HEK293 (cell line): ENCODE measurements at regions of chr11 and their contacts with region 1.

Region 1: DNA sequence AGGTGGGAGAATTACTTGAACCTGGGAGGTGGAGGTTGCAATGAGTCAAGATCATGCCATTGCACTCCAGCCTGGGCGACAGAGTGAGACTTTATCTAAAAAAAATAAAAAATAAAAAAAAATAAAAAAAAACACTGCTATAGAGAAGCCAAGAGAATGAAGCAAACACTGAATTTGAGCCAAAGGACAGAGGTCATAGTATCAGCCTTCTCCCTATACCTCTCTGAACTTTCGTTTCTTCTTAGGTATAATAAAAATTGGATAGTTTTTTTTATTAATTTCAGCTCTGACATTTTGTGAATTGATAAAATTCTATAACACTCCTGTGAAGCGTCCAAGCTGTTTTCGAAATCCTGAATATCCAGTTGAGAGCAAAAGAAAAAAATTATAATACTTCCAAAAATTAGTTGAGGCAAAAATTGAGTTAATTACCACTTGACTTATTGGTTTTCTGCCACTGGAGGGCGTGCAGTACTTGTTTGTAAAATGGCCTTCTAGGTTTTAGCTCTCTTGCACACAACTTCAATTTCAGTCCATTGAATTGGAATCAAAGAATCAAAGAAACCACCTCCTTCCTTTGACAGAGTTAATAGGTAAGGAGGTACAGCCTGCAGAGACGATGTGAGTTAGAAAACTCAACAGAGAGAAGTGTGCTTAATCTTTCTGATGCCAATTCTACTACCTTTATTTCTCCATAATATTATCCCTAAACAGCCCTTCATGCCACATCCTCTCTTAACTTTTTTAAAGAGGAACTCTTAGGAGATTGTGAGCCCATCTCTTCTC is 143.2 kb downstream of the BBOX1 start:
- H3K4me3 ChIP-seq: no peak overlapping the region
- H3K27ac ChIP-seq: no peak overlapping the region
- H3K4me1 ChIP-seq: no peaks in the 10 kb centered on the region
- CTCF ChIP-seq: no peak

Region 2: GRCh38 chr11:27201454-27202236 is 17.8 kb after region 1 on chr11:
- CTCF ChIA-PET with region 1: interaction called, 25 read pairs
- POLR2A ChIA-PET with region 1: no interaction called
- H3K4me3 ChIP-seq: no peak overlapping the region
- H3K27ac ChIP-seq: peak overlapping the region; percentile 93
- H3K4me1 ChIP-seq: peaks cover 16% of the 10 kb centered on the region
- CTCF ChIP-seq: no peak

Region 3: DNA sequence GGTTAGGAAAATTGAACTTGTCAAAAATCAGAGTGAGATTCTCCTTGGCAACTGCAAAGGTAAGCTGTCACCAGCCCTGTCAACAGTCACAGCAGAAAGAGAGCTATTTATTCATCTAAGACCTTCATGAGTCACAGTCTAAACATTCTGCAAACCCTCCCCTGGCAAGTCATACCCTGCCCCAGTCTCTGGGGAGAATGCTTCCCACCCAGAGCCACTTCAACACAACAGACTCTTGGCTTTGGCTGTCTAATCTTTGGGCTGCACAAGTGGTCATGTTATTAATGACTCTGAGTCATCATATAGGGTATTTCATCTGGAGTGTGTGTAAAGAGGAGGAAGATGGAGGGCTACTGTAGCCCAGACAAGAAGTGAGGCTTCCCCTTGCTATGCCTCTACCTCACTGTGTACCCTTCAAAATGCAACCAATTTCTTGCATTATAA is 25.7 kb after region 1 on chr11:
- CTCF ChIA-PET with region 1: interaction called, 53 read pairs
- POLR2A ChIA-PET with region 1: interaction called, 3 read pairs
- H3K4me3 ChIP-seq: no peak overlapping the region
- H3K27ac ChIP-seq: peak overlapping the region; percentile 64
- H3K4me1 ChIP-seq: peaks cover 17% of the 10 kb centered on the region
- CTCF ChIP-seq: no peak

Region 4: GRCh38 chr11:27497284-27497866 is 313.5 kb after region 1 on chr11:
- CTCF ChIA-PET with region 1: interaction called, 46 read pairs
- POLR2A ChIA-PET with region 1: no interaction called
- H3K4me3 ChIP-seq: no peak overlapping the region
- H3K27ac ChIP-seq: no peak overlapping the region
- H3K4me1 ChIP-seq: no peaks in the 10 kb centered on the region
- CTCF ChIP-seq: no peak